Breast epithelium (tissue), 4 donors: ENCODE measurements at regions of chr3 and their contacts with region 1.

Region 1: GRCh38 chr3:14261229-14261628 is 82.6 kb downstream of the LSM3 start:
- DNase-seq: peak; percentile 79 to 87
- H3K4me3 ChIP-seq: no peak overlapping the region
- H3K27ac ChIP-seq: no peak overlapping the region
- H3K4me1 ChIP-seq: no peaks in the 10 kb centered on the region
- H3K27me3 ChIP-seq: no peaks in the 10 kb centered on the region
- CTCF ChIP-seq: peak; percentile 81 to 96 (median 84)
- POLR2A ChIP-seq: no peak

Region 2: GRCh38 chr3:14203521-14204079 is 57.6 kb before region 1 on chr3:
- intact Hi-C with region 1: no loop called
- DNase-seq: peak; percentile 65 to 71
- H3K4me3 ChIP-seq: no peak overlapping the region
- H3K27ac ChIP-seq: peak overlapping the region; percentile 78 to 87
- H3K4me1 ChIP-seq: peaks cover 0 to 15% of the 10 kb centered on the region in 2 donors
- H3K27me3 ChIP-seq: no peaks in the 10 kb centered on the region
- CTCF ChIP-seq: peak; percentile 85 to 86 (median 86)
- POLR2A ChIP-seq: no peak

Region 3: DNA sequence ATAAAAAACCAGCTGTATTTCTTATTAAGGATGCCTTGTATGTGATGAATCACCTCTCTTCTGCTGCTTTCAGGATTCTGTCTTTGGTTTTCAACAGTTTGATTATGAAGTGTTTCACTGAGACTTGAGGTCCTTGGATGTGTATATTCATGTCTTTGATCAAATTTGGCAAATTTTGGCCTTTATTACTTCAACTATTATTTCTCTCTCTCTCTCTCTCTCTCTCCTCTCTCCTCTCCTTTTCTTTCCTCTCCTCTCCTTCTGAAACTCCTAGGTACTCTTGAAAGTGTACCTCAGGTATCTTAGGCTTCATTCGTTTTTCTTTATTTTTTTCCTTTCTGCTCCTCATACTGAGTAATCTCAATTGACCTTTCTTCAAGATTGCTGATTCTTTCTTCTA is 39.3 kb before region 1 on chr3:
- intact Hi-C with region 1: loop called (anchors 2 kb)
- DNase-seq: no peak
- H3K4me3 ChIP-seq: no peak overlapping the region
- H3K27ac ChIP-seq: no peak overlapping the region
- H3K4me1 ChIP-seq: no peaks in the 10 kb centered on the region
- H3K27me3 ChIP-seq: no peaks in the 10 kb centered on the region
- CTCF ChIP-seq: no peak
- POLR2A ChIP-seq: no peak

Region 4: GRCh38 chr3:14467814-14468620 is 206.8 kb after region 1 on chr3:
- intact Hi-C with region 1: loop called (anchors 5 kb)
- DNase-seq: peak in 1 of 2 donors; percentile 44
- H3K4me3 ChIP-seq: no peak overlapping the region
- H3K27ac ChIP-seq: no peak overlapping the region
- H3K4me1 ChIP-seq: no peaks in the 10 kb centered on the region
- H3K27me3 ChIP-seq: no peaks in the 10 kb centered on the region
- CTCF ChIP-seq: peak; percentile 82 to 94 (median 92)
- POLR2A ChIP-seq: no peak